ENCODE measurements at regions of chr10 and their contacts with region 1.

Region 1: DNA sequence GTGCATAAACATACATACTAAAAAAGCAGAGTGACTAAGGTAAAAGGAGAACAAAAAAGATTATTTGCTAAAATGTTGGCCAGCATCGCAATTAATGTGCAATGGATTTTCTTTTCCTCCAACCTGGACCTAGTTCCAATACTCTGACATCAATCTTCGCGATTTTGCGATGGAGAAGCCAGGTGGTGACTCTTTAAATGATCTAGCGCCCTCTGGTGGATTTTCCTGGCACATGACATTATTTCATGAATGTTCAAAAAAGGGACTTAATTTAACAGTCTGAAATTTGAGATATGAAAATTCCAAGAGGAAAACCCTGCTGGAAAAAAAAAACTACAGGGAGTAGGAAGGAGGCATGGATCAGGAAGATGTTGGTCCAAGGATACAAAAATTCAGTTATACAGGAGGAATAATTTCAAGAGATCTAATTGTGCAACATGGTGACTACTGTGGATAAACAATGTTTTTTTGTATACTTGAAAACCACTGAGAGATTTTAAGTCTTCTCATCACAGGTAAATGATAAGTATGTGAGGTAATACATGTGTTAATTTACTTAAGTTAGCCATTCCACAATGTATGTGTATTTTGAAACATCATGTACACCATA is 4.3 kb upstream of the KCNMA1 start:
- DNase-seq: peak; percentile 42 to 83
- H3K4me3 ChIP-seq: no peak overlapping the region
- H3K27ac ChIP-seq: no peak overlapping the region
- H3K4me1 ChIP-seq: peaks cover 0 to 3% of the 10 kb centered on the region in 2 donors
- H3K27me3 ChIP-seq: no peaks in the 10 kb centered on the region
- CTCF ChIP-seq: peak; percentile 76 to 88 (median 86)
- POLR2A ChIP-seq: no peak

Region 2: GRCh38 chr10:77062381-77062780 is 579.5 kb before region 1 on chr10:
- intact Hi-C with region 1: no loop called
- DNase-seq: no peak
- H3K4me3 ChIP-seq: no peak overlapping the region
- H3K27ac ChIP-seq: no peak overlapping the region
- H3K4me1 ChIP-seq: no peaks in the 10 kb centered on the region
- H3K27me3 ChIP-seq: no peaks in the 10 kb centered on the region
- CTCF ChIP-seq: no peak
- POLR2A ChIP-seq: no peak

Region 3: GRCh38 chr10:77173615-77174461 is 468.1 kb before region 1 on chr10:
- intact Hi-C with region 1: loop called (anchors 5 kb)
- DNase-seq: peak; percentile 74 to 83
- H3K4me3 ChIP-seq: no peak overlapping the region
- H3K27ac ChIP-seq: peak overlapping the region; percentile 74 to 78
- H3K4me1 ChIP-seq: no peaks in the 10 kb centered on the region
- H3K27me3 ChIP-seq: no peaks in the 10 kb centered on the region
- CTCF ChIP-seq: peak; percentile 87 to 93 (median 91)
- POLR2A ChIP-seq: no peak

Region 4: DNA sequence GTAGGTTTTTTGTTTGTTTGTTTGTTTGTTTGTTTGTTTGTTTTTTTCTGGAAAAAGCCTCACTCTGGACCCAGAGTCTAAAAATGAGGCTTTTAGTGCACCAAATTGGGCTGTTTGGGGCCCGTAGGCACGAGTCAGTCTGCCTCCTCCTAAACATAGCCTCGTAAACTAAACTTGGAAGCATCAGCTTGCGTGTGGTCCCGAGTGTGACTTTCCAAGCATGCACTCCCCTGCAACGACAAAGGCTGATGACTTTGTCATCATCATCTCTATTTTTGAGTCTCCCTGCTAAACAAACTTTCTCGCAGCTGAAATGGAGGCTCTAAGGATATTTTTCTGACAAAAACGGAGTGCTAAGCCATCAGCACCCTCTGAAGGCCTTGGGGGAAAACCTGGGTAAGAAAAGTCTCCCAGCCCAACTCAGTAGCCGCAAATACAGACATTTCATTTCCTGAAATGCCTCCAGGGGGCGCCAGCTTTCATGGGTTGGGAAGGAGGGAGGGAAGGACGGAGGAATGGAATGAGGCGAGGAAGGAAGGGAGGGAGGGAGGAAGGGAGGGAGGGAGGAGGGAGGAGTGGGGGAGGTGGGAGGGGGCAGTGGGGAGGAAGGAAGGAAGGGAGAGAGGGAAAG is 250.2 kb before region 1 on chr10:
- intact Hi-C with region 1: loop called (anchors 10 kb)
- DNase-seq: peak; percentile 79 to 89
- H3K4me3 ChIP-seq: no peak overlapping the region
- H3K27ac ChIP-seq: peak overlapping the region; percentile 82 to 89
- H3K4me1 ChIP-seq: peaks cover 7 to 15% of the 10 kb centered on the region in 2 donors
- H3K27me3 ChIP-seq: no peaks in the 10 kb centered on the region
- CTCF ChIP-seq: peak; percentile 58 to 76 (median 64)
- POLR2A ChIP-seq: no peak

Region 5: DNA sequence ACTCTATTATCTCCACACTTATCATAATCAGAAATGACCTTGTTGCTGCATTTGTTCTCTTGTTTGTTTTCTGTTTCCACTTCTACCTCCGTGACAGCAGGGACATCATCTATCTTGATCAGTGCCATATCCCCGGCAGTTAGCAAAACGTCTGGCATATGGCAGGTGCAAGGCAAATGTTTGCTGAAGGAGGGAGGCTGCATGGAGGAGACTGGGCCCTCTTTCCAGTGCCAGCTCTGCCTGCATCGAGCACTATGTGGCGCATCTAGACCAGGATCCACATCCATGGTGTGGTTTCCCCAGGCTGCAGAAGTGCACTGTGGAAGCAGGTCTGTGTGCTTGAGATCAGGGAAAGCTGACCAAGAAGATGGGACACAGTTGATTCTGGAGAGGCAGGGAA is 185.5 kb before region 1 on chr10:
- intact Hi-C with region 1: no loop called
- DNase-seq: no peak
- H3K4me3 ChIP-seq: no peak overlapping the region
- H3K27ac ChIP-seq: no peak overlapping the region
- H3K4me1 ChIP-seq: no peaks in the 10 kb centered on the region
- H3K27me3 ChIP-seq: no peaks in the 10 kb centered on the region
- CTCF ChIP-seq: no peak
- POLR2A ChIP-seq: no peak

Region 6: GRCh38 chr10:77555591-77556212 is 86.2 kb before region 1 on chr10:
- intact Hi-C with region 1: no loop called
- DNase-seq: no peak
- H3K4me3 ChIP-seq: no peak overlapping the region
- H3K27ac ChIP-seq: peak overlapping the region; percentile 63 to 73
- H3K4me1 ChIP-seq: no peaks in the 10 kb centered on the region
- H3K27me3 ChIP-seq: no peaks in the 10 kb centered on the region
- CTCF ChIP-seq: no peak
- POLR2A ChIP-seq: no peak